ENCODE measurements at regions of chr3 and their contacts with region 1.

Region 1: DNA sequence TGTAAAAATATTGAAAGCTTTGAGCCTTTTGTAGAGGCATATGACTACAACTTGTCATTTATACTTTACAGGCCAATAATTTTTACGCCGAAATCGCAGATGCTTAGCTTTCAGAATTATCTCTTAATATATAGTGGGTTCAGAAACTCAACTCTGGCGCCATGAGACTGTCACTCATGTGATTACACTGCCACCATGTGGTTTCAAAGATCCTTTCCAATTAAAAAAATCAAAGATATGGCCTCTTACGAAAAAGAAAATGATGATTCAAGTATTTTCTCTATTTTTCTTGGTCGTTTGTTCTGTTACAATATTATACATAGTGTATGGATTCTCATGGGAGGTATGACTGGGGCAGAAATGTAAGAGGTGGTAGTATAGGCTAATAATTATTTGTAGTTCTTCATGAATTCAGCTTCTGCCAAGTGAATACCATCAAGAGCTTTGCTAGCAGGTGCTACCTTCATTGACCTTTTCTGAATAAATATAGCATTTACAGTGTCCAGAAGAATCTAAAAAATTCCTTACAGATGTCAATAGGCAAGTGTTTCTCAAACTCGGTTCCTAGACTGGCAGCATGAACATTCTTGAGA is 751.7 kb upstream of the GOLIM4 start:
- DNase-seq: peak; percentile 26
- H3K4me3 ChIP-seq: no peak overlapping the region
- CTCF ChIP-seq: peak; percentile 41

Region 2: GRCh38 chr3:168511428-168512014 is 335.9 kb before region 1 on chr3:
- in situ Hi-C with region 1: loop called (anchors 25 kb)
- DNase-seq: no peak
- H3K4me3 ChIP-seq: no peak overlapping the region
- CTCF ChIP-seq: peak; percentile 64